ENCODE measurements at regions of chr10 and their contacts with region 1.

Region 1: GRCh38 chr10:31808258-31809218 is 120.1 kb downstream of the ARHGAP12 start:
- DNase-seq: peak; percentile 72
- H3K4me3 ChIP-seq: peak overlapping the region; percentile 7 to 37 (median 33)
- H3K27ac ChIP-seq: peak overlapping the region; percentile 50 to 84 (median 79)
- H3K4me1 ChIP-seq: peaks cover 0 to 32% (median 7%) of the 10 kb centered on the region in 4 donors
- H3K27me3 ChIP-seq: no peaks in the 10 kb centered on the region
- CTCF ChIP-seq: peak; percentile 43 to 57 (median 44)
- EP300 ChIP-seq: no peak
- POLR2A ChIP-seq: no peak

Region 2: GRCh38 chr10:30687698-30688219 is 1120.8 kb before region 1 on chr10:
- intact Hi-C with region 1: loop called (anchors 5 kb)
- DNase-seq: peak; percentile 88
- H3K4me3 ChIP-seq: no peak overlapping the region
- H3K27ac ChIP-seq: no peak overlapping the region
- H3K4me1 ChIP-seq: peaks cover 0 to 6% (median 0%) of the 10 kb centered on the region in 4 donors
- H3K27me3 ChIP-seq: no peaks in the 10 kb centered on the region
- CTCF ChIP-seq: peak; percentile 62 to 89 (median 78)
- EP300 ChIP-seq: no peak
- POLR2A ChIP-seq: no peak

Region 3: GRCh38 chr10:30727524-30727923 is 1081.0 kb before region 1 on chr10:
- intact Hi-C with region 1: loop called (anchors 2 kb)
- DNase-seq: no peak
- H3K4me3 ChIP-seq: no peak overlapping the region
- H3K27ac ChIP-seq: peak overlapping the region in 2 of 4 donors; percentile 59 to 65
- H3K4me1 ChIP-seq: peaks cover 0 to 13% (median 5%) of the 10 kb centered on the region in 4 donors
- H3K27me3 ChIP-seq: no peaks in the 10 kb centered on the region
- CTCF ChIP-seq: no peak
- EP300 ChIP-seq: no peak
- POLR2A ChIP-seq: no peak

Region 4: GRCh38 chr10:31687663-31688482 is 120.7 kb before region 1 on chr10:
- intact Hi-C with region 1: loop called (anchors 5 kb)
- DNase-seq: no peak
- H3K4me3 ChIP-seq: no peak overlapping the region
- H3K27ac ChIP-seq: no peak overlapping the region
- H3K4me1 ChIP-seq: no peaks in the 10 kb centered on the region
- H3K27me3 ChIP-seq: no peaks in the 10 kb centered on the region
- CTCF ChIP-seq: no peak
- EP300 ChIP-seq: no peak
- POLR2A ChIP-seq: no peak